Naive thymus-derived CD8-positive, alpha-beta T cell (primary cell): ENCODE measurements at regions of chr2 and their contacts with region 1.

Region 1: DNA sequence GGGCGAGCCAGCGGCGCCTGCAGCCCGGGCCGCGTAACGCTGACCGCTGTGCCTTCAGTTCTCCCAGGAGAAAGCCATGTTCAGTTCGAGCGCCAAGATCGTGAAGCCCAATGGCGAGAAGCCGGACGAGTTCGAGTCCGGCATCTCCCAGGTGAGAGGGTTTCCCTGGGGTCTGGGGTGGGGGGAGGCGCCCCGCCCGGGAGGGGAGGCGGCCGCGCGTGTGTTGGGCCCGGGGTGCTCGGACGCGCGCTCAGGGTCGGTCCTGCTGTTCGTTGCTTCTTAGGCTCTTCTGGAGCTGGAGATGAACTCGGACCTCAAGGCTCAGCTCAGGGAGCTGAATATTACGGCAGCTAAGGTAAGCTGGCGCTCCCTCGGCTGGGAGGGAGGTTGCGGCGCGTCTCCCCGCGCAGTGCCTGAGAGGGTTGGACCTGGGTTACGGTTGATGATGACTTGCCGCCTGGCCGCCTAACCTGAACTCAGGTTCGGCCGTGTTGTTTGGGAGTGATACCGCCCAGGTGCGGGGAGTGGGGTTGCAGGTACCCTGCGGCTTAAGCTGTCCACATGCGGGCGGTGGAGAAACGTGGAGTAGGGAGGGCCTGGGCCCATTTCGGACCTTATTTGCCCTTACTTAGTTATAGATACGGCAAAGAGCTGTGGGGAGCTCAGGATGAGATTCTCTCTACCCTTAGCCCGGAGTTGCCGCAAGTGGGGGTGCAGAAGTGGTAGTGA is 638 bp downstream of the RPS7 start:
- DNase-seq: peak in 8 of 10 donors; percentile 5 to 50 (median 32)
- ATAC-seq: peak; percentile 39 to 50
- H3K4me3 Mint-ChIP-seq: peak overlapping the region; percentile 86 to 94 (median 90)
- H3K27ac Mint-ChIP-seq: peak overlapping the region; percentile 95 to 98 (median 97)
- H3K4me1 Mint-ChIP-seq: peaks cover 28 to 49% (median 43%) of the 10 kb centered on the region in 4 donors
- H3K27me3 Mint-ChIP-seq: no peaks in the 10 kb centered on the region

Region 2: GRCh38 chr2:3558205-3559014 is 17.3 kb before region 1 on chr2 and contains the start of gene RNASEH1:
- POLR2A ChIA-PET with region 1: interaction called, 63 read pairs
- DNase-seq: peak; percentile 95 to 99 (median 98)
- ATAC-seq: peak; percentile 93 to 95
- H3K4me3 Mint-ChIP-seq: peak within 1 kb of the TSS; percentile 86 to 95 (median 92)
- H3K27ac Mint-ChIP-seq: peak within 1 kb of the TSS; percentile 87 to 98 (median 97)
- H3K4me1 Mint-ChIP-seq: peaks cover 8 to 42% (median 34%) of the 10 kb centered on the region in 4 donors
- H3K27me3 Mint-ChIP-seq: no peaks in the 10 kb centered on the region
- polyA plus RNA-seq, gene RNASEH1: 35.4 to 47.0 (median 35.5) TPM

Region 3: DNA sequence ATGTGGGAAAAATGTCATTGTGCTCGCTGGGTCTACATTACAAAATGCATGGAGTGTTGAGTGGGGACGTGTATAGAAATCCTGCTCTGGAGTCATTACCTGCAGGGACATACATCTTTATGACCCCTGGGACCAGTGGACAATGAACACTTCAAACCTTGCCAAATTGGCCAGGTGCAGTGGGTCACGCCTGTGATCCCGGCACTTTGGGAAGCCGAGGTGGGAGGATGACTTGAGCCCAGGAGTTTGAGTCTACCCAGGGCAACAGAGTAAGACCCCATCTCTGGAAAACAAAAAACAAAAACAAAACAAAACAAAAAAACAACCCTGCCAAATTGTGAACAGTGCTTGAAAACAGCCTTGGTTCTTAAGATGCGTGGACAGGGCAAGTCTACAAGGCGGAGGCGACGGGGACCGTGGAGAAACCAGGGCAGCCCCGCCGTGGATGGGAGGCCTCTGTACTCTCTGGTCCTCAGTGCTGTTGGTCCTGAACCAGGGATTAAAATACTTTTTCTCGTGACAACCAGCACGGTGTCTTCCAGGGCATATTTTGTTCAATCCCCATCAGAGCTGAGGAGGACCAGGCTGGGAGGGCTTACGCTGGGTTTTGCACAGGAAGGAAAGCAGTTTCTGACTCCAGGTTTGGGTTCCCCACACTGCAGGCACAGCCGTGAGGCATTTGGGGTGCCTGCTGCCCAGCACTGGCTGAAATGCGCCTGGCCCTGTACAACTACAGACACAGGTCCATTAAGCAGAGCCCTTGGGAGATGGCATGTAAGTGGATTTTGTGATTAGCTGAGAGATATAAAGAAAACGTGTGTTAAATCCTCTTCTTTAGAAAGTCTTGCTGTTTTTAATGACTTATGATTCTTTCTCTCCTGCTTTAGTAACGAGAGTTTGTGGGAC is 32.9 kb after region 1 on chr2:
- POLR2A ChIA-PET with region 1: interaction called, 14 read pairs
- DNase-seq: no peak
- ATAC-seq: peak in 1 of 2 donors; percentile 16
- H3K4me3 Mint-ChIP-seq: peak overlapping the region in 4 of 10 donors; percentile 8 to 68 (median 53)
- H3K27ac Mint-ChIP-seq: peak overlapping the region in 7 of 10 donors; percentile 46 to 91 (median 66)
- H3K4me1 Mint-ChIP-seq: peaks cover 0 to 45% (median 9%) of the 10 kb centered on the region in 4 donors
- H3K27me3 Mint-ChIP-seq: peaks cover 0 to 23% (median 0%) of the 10 kb centered on the region in 5 donors